Motor neuron (in vitro differentiated cells): ENCODE measurements at regions of chr6 and their contacts with region 1.

Region 1: DNA sequence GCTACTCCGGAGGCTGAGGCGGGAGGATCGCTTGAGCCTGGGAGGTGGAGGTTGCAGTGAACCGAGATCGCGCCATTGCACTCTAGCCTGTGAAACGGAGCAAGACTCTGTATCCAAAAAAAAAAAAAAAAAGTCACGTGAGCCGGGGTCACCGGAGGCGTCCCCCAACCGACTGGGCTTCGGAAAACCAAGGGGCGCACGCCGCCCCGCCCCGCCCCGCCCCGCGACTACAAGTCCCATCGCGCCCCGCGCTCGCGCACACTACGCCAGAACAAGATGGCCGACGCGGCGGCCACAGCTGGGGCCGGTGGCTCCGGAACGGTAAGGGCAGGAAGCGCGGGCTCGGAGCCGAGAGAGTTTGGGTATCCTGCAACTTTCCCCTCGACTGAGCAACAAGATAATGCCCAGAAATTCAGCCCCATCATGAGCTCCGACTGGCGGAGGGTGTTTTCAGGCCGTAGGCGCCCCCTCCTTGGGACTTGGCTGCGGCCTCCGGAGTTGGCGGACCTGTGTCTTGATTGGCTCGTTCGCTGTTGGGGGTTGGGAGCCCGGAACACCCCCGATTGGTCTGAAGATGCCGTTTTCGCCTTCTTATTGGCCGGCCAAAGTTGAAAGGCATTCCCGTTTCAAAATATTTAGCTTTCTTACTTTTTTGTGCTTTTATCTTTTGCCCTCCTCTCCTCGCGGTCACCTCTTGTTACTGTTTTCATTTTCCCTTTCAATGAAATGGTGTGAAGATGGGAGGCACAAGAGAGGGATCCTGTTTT is at the start of gene TAF8:
- ATAC-seq: peak; percentile 82 to 96 (median 90)
- H3K4me3 ChIP-seq: peak within 1 kb of the TSS; percentile 57 to 90 (median 83)
- H3K27ac ChIP-seq: peak within 1 kb of the TSS; percentile 63 to 89
- H3K4me1 ChIP-seq: peaks cover 2 to 7% of the 10 kb centered on the region in 2 donors
- total RNA-seq, gene TAF8: 3.7 to 22.7 (median 8.9) TPM

Region 2: GRCh38 chr6:42166444-42167141 is 116.1 kb after region 1 on chr6:
- in situ Hi-C with region 1: loop called in 1 of 9 experiments (anchors 25 kb)
- ATAC-seq: peak; percentile 66 to 93 (median 86)
- H3K4me3 ChIP-seq: no peak overlapping the region
- H3K27ac ChIP-seq: no peak overlapping the region
- H3K4me1 ChIP-seq: no peaks in the 10 kb centered on the region